ENCODE measurements at regions of chr2 and their contacts with region 1.

Region 1: DNA sequence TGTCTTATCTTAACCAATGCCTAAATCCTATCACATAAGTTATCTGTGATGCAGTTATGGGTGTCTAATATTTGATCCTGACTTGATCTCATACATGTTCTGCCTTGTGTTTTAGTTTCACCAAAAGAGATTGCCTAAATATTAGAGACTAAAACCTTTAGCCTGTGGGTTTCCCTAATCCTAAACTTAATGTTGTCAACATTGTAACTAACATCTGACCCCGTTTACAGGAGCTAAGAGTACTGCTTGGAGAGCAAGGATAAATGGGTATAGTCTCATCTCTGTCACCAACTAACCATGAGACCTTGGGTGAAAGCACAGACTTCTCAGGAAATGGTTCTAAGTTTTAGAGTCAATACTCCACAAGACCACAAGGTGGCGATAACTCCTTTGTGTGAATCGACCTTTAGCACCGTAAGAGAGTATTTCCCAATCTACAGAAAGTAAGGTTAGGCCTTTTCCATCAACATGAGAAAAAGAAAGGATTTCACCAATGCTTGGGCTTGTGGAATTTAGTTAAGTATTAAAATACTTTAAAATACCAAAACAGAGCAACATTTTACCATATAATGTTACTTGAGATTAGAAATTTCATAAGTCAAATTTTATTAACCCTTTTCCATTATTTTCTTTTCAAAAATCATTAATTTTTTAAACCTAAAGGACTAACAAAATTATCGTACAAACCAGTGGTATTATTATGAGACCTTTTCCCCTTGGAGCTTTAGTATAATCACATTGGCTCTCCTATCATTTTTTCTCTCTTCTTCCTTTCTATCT is 60.5 kb downstream of the G6PC2 start:
- ATAC-seq: peak in 4 of 8 experiments; percentile 59 to 89 (median 82)
- H3K4me3 ChIP-seq: no peak overlapping the region
- H3K27ac ChIP-seq: no peak overlapping the region
- H3K4me1 ChIP-seq: peaks cover 0 to 7% of the 10 kb centered on the region in 2 donors

Region 2: GRCh38 chr2:169095621-169096105 is 134.0 kb after region 1 on chr2:
- in situ Hi-C with region 1: loop called in 1 of 9 experiments (anchors 25 kb)
- ATAC-seq: peak in 3 of 8 experiments; percentile 55 to 95 (median 93)
- H3K4me3 ChIP-seq: no peak overlapping the region
- H3K27ac ChIP-seq: no peak overlapping the region
- H3K4me1 ChIP-seq: no peaks in the 10 kb centered on the region

Region 3: DNA sequence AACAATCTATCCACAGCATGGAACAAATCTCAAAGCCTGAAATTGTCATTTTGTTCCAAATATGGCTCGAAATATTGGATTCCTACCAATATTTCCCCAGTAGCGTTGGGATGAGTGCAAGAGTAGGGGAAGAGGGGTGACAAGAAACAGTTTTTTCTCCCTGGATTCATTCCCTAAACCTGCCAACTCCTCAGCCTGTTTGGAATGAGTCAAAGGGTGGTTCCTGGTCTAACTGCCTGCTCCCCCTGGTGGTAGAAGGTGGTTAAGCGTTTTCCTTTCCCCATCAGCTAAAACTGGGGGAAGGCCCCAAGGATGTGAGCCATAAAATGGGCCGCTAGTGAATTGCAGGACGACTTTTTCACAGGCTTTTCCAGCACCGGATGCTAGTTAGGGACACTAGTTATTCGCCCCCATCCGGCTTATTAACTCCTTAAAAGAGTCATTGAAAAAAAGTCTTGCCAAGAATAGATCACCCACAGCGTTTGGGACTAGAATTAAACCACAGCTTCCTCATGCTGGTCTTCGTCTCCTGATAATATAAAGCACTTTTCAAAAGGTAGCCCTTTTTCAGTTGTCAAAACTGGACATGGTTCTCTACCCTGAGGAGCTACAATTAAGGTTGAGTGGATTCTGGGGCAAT is 180.2 kb after region 1 on chr2:
- in situ Hi-C with region 1: loop called in 1 of 9 experiments (anchors 25 kb)
- ATAC-seq: peak in 3 of 8 experiments; percentile 68 to 78 (median 78)
- H3K4me3 ChIP-seq: no peak overlapping the region
- H3K27ac ChIP-seq: no peak overlapping the region
- H3K4me1 ChIP-seq: no peaks in the 10 kb centered on the region

Region 4: DNA sequence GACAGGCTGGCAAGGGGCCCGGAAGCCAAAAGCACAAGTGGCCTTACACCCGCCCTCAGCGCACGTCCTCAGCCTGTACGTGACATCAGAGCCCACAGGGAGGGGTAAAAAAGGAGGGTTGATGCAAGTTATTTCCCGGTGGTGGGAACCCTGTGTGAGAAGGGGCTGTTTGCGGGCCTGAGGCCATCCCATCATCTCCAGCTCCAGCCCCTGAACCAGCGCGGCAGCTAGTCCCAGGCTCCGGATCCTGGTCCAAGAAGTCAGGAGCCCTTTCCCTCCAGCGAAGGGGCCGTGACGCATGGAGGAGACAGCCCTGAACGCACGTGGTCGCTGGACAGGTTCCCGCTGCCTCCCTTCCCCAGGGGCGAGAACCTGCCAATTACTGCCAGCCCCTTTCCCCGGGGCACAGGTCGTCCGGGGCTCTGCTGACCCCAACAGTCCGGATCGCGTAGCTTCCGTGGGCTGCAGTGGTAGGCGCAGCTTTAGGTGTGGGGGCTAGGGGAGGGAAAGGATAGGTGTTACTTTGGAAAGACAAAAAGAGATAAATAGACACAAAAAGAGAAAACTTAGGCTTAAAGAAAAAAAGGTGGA is 402.0 kb after region 1 on chr2:
- in situ Hi-C with region 1: no loop called
- ATAC-seq: peak in 7 of 8 experiments; percentile 5 to 22 (median 17)
- H3K4me3 ChIP-seq: peak overlapping the region; percentile 37 to 60 (median 48)
- H3K27ac ChIP-seq: peak overlapping the region in 1 of 2 donors; percentile 28
- H3K4me1 ChIP-seq: peaks cover 10 to 15% of the 10 kb centered on the region in 2 donors